Heart left ventricle (tissue), 16 donors: ENCODE measurements at regions of chr5 and their contacts with region 1.

Region 1: GRCh38 chr5:145874765-145875164 is 2.0 kb upstream of the GRXCR2 start:
- DNase-seq: peak in 1 of 5 donors; percentile 47
- ATAC-seq: peak in 2 of 4 donors; percentile 39 to 67
- H3K4me3 ChIP-seq: no peak overlapping the region
- H3K27ac ChIP-seq: no peak overlapping the region
- H3K4me1 ChIP-seq: no peaks in the 10 kb centered on the region
- H3K27me3 ChIP-seq: no peaks in the 10 kb centered on the region
- CTCF ChIP-seq: no peak
- POLR2A ChIP-seq: no peak

Region 2: GRCh38 chr5:145834917-145835847 is 39.6 kb before region 1 on chr5 and contains the start of gene PRELID2:
- intact Hi-C with region 1: loop called in 1 of 10 experiments (anchors 1 kb)
- DNase-seq: peak; percentile 89 to 93 (median 91)
- ATAC-seq: peak; percentile 88 to 97 (median 95)
- H3K4me3 ChIP-seq: peak within 1 kb of the TSS; percentile 65 to 85 (median 76)
- H3K27ac ChIP-seq: peak within 1 kb of the TSS; percentile 40 to 82 (median 69)
- H3K4me1 ChIP-seq: peaks cover 0 to 26% (median 13%) of the 10 kb centered on the region in 12 donors
- H3K27me3 ChIP-seq: no peaks in the 10 kb centered on the region
- CTCF ChIP-seq: peak in 3 of 12 donors; percentile 12 to 32 (median 28)
- POLR2A ChIP-seq: peak in 1 of 2 donors; percentile 75
- total RNA-seq, gene PRELID2: 6.5 to 26.7 (median 10.6) TPM

Region 3: DNA sequence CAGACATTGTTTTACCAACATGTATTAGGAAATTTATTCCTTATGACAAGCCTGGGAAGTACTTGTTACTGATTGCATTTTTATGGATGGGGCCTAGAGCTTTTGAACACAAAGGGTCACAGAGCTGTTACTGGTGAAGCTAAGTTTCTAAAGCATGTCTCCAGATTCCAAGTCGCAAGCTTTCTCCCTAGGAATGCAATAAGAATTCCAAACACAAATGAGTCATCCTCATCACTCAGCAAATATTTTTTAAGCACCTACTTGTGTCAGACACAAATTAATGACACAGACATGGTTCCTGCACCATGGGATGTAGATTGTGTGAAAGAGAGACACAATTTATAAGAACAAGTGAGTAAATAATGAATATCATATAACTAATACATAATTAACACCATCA is 50.6 kb after region 1 on chr5:
- intact Hi-C with region 1: no loop called
- DNase-seq: no peak
- ATAC-seq: peak in 1 of 4 donors; percentile 33
- H3K4me3 ChIP-seq: no peak overlapping the region
- H3K27ac ChIP-seq: no peak overlapping the region
- H3K4me1 ChIP-seq: no peaks in the 10 kb centered on the region
- H3K27me3 ChIP-seq: no peaks in the 10 kb centered on the region
- CTCF ChIP-seq: no peak
- POLR2A ChIP-seq: no peak